Transverse colon (tissue), 4 donors: ENCODE measurements at regions of chr3 and their contacts with region 1.

Region 1: GRCh38 chr3:25655659-25656058 is 9.0 kb downstream of the TOP2B start:
- DNase-seq: no peak
- H3K4me3 ChIP-seq: no peak overlapping the region
- H3K27ac ChIP-seq: no peak overlapping the region
- H3K4me1 ChIP-seq: peaks cover 7 to 73% (median 22%) of the 10 kb centered on the region in 4 donors
- H3K27me3 ChIP-seq: no peaks in the 10 kb centered on the region
- CTCF ChIP-seq: no peak
- EP300 ChIP-seq: no peak
- POLR2A ChIP-seq: no peak

Region 2: DNA sequence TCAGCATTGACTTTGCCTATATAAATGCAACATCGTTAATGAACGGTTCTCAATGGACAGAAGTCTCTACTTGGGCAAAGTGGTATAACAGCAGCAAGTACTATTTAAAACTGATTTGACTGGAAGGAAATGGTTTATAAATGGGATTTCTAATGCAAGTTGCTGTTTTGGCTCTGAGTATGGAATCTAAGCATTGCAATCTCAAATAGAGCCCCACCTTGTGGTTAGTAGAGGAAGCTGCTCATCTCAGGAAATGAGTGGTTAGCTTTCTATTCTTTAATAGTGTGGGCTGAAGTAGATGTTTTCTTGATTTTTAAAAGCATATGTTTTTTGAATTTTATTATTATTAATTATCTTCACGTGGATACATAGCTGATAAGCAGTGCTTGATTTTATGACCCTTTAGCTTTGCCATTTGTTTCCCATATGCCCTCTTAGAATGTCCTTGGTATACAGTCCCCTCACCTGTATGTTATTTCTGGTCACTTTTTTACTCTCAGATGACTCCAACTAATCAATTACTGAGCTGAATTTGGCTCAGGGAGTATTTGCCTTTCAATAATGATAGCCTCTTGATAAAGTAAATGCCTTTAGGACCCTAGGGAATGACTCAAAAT is 201.4 kb after region 1 on chr3:
- in situ Hi-C with region 1: loop called (anchors 5 to 25 kb)
- intact Hi-C with region 1: no loop called
- DNase-seq: no peak
- H3K4me3 ChIP-seq: no peak overlapping the region
- H3K27ac ChIP-seq: no peak overlapping the region
- H3K4me1 ChIP-seq: peaks cover 0 to 9% (median 0%) of the 10 kb centered on the region in 4 donors
- H3K27me3 ChIP-seq: no peaks in the 10 kb centered on the region
- CTCF ChIP-seq: peak; percentile 54 to 74 (median 64)
- EP300 ChIP-seq: no peak
- POLR2A ChIP-seq: no peak

Region 3: DNA sequence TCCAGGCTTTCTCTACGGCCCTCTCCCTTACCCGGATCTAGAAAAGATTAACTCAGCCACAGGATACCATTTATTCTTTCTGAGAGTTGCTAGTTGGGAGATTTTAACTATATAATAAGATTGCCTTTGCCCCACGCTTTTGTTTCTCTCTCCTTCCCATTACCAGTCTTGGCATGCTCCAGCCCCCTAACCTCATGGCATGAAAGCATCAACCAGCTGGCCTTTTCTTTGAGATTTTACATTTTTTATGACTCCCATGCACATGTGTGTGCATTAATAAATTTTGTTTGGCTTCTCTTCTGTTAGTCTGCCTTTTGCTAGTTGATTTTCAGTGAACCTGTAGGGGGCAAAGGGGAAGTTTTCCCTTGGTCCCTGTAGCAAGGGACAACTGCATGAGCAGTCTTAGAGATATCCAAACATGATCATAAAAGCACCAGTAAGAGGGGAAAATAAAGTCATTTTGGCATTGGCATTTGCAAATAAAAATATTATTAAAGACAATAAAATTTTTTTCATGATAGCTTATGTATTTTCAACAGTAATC is 207.8 kb after region 1 on chr3:
- in situ Hi-C with region 1: loop called in 3 of 4 experiments (anchors 10 to 25 kb)
- intact Hi-C with region 1: no loop called
- DNase-seq: no peak
- H3K4me3 ChIP-seq: no peak overlapping the region
- H3K27ac ChIP-seq: no peak overlapping the region
- H3K4me1 ChIP-seq: no peaks in the 10 kb centered on the region
- H3K27me3 ChIP-seq: no peaks in the 10 kb centered on the region
- CTCF ChIP-seq: no peak
- EP300 ChIP-seq: no peak
- POLR2A ChIP-seq: no peak

Region 4: GRCh38 chr3:26049951-26050350 is 394.3 kb after region 1 on chr3:
- in situ Hi-C with region 1: no loop called
- intact Hi-C with region 1: no loop called
- DNase-seq: no peak
- H3K4me3 ChIP-seq: no peak overlapping the region
- H3K27ac ChIP-seq: no peak overlapping the region
- H3K4me1 ChIP-seq: no peaks in the 10 kb centered on the region
- H3K27me3 ChIP-seq: no peaks in the 10 kb centered on the region
- CTCF ChIP-seq: no peak
- EP300 ChIP-seq: no peak
- POLR2A ChIP-seq: no peak